ENCODE measurements at regions of chr9 and their contacts with region 1.

Region 1: DNA sequence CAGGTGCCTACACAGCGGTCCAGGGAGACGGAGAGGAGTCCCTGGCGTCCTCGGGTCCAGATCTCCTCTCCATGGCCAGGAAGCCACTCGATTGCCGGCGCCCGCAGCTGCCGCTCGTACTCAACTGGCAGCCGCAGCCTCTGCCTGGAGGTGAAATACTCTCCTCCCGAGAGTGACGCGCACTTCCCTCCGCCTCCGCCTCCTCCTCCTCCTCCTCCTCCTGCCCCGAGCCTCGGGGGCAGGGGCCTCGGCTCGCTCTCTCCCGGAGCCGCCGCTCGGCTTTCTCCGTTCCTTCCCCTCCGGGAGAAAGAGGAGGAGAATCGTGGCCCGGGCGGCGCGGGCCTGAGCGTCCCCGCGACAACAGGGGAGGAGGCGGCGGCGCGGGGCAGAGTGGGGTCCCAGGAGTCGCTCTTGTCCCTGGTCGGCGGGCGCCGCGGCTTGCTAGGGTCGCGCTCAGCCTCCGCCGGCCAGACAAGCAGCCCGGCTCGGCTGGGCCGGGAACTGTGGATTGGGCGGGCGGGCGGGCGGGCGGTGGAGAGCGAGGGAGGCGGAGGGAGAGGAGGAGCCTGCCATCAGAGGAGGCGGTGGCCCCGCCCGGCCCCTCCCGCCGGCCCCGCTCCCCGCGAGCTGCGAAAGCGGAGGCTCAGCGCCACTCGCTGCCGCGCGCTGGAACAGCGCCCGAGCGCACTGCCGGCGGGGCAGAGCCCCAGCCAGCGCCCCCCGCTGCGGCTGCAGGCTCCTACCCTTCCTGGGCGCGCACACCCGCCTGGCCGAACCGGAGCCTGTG is at the start of gene CEMIP2:
- DNase-seq: peak; percentile 87 to 92 (median 90)
- H3K4me3 ChIP-seq: peak within 1 kb of the TSS; percentile 82 to 86
- H3K4me3 Mint-ChIP-seq: peak within 1 kb of the TSS; percentile 95 to 99 (median 97)
- H3K27ac ChIP-seq: peak within 1 kb of the TSS; percentile 87
- H3K27ac Mint-ChIP-seq: peak within 1 kb of the TSS; percentile 97 to 99 (median 98)
- H3K4me1 ChIP-seq: peaks cover 42% of the 10 kb centered on the region
- H3K4me1 Mint-ChIP-seq: peaks cover 32 to 56% (median 38%) of the 10 kb centered on the region in 4 donors
- H3K27me3 ChIP-seq: no peaks in the 10 kb centered on the region
- H3K27me3 Mint-ChIP-seq: no peaks in the 10 kb centered on the region
- total RNA-seq, gene CEMIP2: 85.8 to 89.4 TPM

Region 2: DNA sequence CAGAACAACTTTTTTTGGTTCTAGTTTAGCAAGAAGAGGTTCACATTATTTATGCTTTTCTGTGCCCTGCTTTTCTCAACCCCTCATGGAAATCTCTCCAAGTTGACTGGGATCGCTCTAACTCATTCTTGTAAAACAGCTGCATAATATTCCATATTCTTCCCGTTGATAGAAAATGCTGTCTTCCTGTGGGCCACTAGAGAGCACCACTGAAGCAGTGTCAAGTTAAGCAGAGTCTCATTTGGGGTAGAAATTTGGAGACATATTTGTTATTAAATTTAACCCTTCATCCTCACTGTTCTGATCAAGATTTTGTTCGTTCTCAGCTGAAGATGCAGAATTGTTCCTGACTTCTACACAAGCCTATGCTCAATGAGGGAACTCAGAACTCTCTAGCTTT is 140.3 kb before region 1 on chr9:
- CTCF ChIA-PET with region 1: interaction called, 6 read pairs
- POLR2A ChIA-PET with region 1: interaction called, 3 read pairs
- intact Hi-C with region 1: loop called (anchors 1 kb)
- DNase-seq: peak in 4 of 5 donors; percentile 22 to 34 (median 25)
- H3K4me3 ChIP-seq: no peak overlapping the region
- H3K4me3 Mint-ChIP-seq: no peak overlapping the region
- H3K27ac ChIP-seq: no peak overlapping the region
- H3K27ac Mint-ChIP-seq: no peak overlapping the region
- H3K4me1 ChIP-seq: no peaks in the 10 kb centered on the region
- H3K4me1 Mint-ChIP-seq: peaks cover 0 to 2% (median 0%) of the 10 kb centered on the region in 4 donors
- H3K27me3 ChIP-seq: no peaks in the 10 kb centered on the region
- H3K27me3 Mint-ChIP-seq: no peaks in the 10 kb centered on the region

Region 3: DNA sequence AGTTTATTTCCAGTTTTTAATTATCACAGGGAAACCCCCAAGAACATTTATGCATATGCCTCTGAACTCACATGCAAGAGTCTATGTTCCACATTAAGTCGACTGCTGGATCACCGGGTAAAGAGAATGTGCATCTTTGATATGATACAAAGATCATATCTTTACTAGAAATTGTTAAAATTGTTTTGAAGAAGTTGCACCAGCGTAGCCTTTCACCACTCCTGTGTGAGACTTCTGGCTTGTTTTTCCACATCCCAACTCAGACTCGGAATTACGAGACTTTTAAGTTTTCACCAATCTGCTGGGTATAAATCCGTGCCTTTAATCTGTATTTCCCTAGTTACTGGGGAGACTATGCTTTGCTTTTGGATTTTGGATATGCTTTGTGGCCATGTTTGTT is 113.4 kb before region 1 on chr9:
- CTCF ChIA-PET with region 1: no interaction called
- POLR2A ChIA-PET with region 1: no interaction called
- intact Hi-C with region 1: no loop called
- DNase-seq: no peak
- H3K4me3 ChIP-seq: no peak overlapping the region
- H3K4me3 Mint-ChIP-seq: no peak overlapping the region
- H3K27ac ChIP-seq: no peak overlapping the region
- H3K27ac Mint-ChIP-seq: no peak overlapping the region
- H3K4me1 ChIP-seq: no peaks in the 10 kb centered on the region
- H3K4me1 Mint-ChIP-seq: peaks cover 0 to 4% (median 2%) of the 10 kb centered on the region in 4 donors
- H3K27me3 ChIP-seq: no peaks in the 10 kb centered on the region
- H3K27me3 Mint-ChIP-seq: no peaks in the 10 kb centered on the region

Region 4: GRCh38 chr9:71675129-71675856 is 93.3 kb before region 1 on chr9:
- CTCF ChIA-PET with region 1: no interaction called
- POLR2A ChIA-PET with region 1: no interaction called
- intact Hi-C with region 1: no loop called
- DNase-seq: no peak
- H3K4me3 ChIP-seq: no peak overlapping the region
- H3K4me3 Mint-ChIP-seq: no peak overlapping the region
- H3K27ac ChIP-seq: no peak overlapping the region
- H3K27ac Mint-ChIP-seq: no peak overlapping the region
- H3K4me1 ChIP-seq: no peaks in the 10 kb centered on the region
- H3K4me1 Mint-ChIP-seq: peaks cover 8 to 22% (median 15%) of the 10 kb centered on the region in 4 donors
- H3K27me3 ChIP-seq: no peaks in the 10 kb centered on the region
- H3K27me3 Mint-ChIP-seq: no peaks in the 10 kb centered on the region

Region 5: DNA sequence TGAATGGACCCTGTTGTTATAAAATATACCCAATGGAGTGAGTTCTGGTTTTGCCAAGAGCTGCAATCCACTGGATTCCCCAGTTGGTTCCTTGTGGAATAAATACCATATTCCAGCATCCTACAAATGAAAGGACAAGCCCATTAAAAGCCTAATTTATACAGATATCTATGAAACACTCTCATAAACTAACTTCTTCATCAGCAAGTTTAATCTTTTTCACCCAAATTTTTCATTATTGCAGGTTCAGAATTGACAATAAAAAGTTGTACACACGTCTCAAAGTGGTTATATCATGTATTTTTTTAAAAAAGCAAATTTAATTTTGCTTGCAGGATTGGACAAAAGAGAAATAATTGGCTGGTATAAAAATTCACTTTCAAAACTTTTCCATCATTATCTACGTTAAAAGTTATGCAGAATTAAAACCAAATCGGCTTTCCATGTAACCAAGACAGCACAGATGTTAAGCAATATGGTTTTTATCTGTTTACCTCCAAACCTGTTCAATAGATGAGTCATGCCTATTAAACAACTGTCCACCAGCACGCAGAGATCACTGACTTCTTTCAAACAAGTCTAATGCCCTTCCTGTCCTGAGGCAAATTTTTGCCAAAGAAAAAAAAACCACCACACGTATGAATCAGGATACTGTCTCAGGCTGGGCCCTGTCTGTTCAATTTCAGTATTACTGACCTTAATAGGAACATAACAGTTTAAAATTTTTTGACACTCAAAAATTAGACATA is 42.8 kb before region 1 on chr9:
- CTCF ChIA-PET with region 1: interaction called, 4 read pairs
- POLR2A ChIA-PET with region 1: interaction called, 4 read pairs
- intact Hi-C with region 1: loop called (anchors 2 kb)
- DNase-seq: no peak
- H3K4me3 ChIP-seq: no peak overlapping the region
- H3K4me3 Mint-ChIP-seq: no peak overlapping the region
- H3K27ac ChIP-seq: no peak overlapping the region
- H3K27ac Mint-ChIP-seq: peak overlapping the region in 1 of 7 donors; percentile 8
- H3K4me1 ChIP-seq: no peaks in the 10 kb centered on the region
- H3K4me1 Mint-ChIP-seq: peaks cover 0 to 4% (median 0%) of the 10 kb centered on the region in 4 donors
- H3K27me3 ChIP-seq: no peaks in the 10 kb centered on the region
- H3K27me3 Mint-ChIP-seq: no peaks in the 10 kb centered on the region

Region 6: DNA sequence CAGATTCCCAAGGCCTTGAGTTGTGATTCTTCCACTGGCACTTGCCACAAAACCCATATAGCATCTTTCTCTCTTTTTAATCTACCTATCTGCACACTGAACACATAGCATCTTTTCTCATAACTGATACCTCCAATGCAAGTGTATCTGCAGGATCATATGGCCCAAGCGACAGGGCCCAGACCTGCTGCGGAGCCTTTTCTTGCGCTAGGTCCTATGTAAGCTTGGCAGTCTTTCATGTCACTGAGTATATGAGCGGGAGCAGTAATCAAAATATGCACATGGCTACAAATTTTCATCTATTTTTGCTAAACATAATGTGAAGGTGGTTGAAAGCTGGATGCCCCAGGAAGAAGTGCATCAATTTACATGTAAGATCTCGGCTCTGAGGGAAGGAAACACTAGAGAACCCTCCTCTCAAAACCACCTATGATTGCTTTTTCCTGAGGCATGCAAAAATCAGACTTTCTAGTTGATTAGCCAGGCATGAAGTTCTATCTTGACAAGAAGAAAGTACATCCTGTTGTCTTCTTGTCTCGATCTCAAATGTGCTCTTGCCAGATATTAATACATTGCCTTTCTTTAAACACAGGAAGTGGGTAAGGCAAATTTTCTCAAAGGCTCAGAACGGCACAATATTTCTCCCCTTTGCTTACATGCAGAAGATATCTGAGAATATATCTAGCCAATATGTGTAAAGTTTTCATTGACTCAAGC is 26.7 kb after region 1 on chr9:
- CTCF ChIA-PET with region 1: interaction called, 7 read pairs
- POLR2A ChIA-PET with region 1: interaction called, 82 read pairs
- intact Hi-C with region 1: loop called (anchors 1 kb)
- DNase-seq: peak; percentile 47 to 81 (median 74)
- H3K4me3 ChIP-seq: peak overlapping the region; percentile 10 to 14
- H3K4me3 Mint-ChIP-seq: peak overlapping the region; percentile 61 to 79 (median 70)
- H3K27ac ChIP-seq: peak overlapping the region; percentile 49
- H3K27ac Mint-ChIP-seq: peak overlapping the region; percentile 85 to 97 (median 92)
- H3K4me1 ChIP-seq: peaks cover 74% of the 10 kb centered on the region
- H3K4me1 Mint-ChIP-seq: peaks cover 39 to 68% (median 57%) of the 10 kb centered on the region in 4 donors
- H3K27me3 ChIP-seq: no peaks in the 10 kb centered on the region
- H3K27me3 Mint-ChIP-seq: no peaks in the 10 kb centered on the region

Region 7: DNA sequence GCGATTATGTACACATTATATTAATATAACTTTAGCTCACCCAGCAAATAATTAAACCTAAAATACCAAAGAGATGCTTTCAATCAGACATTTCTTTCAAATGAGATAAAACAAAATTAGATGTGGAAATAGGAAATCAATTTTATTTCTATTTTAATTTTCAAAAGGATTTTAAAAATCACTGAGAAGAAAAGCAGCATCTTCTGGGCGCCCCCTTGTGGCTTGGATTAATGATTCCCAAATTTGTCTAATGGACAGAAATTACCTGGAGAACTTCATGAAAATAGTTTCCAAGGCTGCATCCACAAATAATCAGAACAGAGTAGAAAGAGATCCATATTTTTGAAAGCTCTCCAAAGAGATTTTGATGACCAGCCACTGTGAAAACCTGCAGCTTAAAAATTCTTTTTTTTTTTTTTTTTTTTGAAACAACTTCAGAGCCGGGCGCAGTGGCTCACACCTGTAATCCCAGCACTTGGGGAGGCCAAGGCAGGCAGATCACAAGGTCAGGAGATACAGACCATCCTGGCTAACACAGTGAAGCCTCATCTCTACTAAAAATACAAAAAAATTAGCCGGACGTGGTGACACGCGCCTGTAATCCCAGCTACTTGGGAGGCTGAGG is 50.6 kb after region 1 on chr9:
- CTCF ChIA-PET with region 1: interaction called, 48 read pairs
- POLR2A ChIA-PET with region 1: interaction called, 14 read pairs
- intact Hi-C with region 1: loop called (anchors 1 kb)
- DNase-seq: peak in 4 of 5 donors; percentile 47 to 56 (median 50)
- H3K4me3 ChIP-seq: no peak overlapping the region
- H3K4me3 Mint-ChIP-seq: no peak overlapping the region
- H3K27ac ChIP-seq: no peak overlapping the region
- H3K27ac Mint-ChIP-seq: no peak overlapping the region
- H3K4me1 ChIP-seq: no peaks in the 10 kb centered on the region
- H3K4me1 Mint-ChIP-seq: peaks cover 8 to 21% (median 13%) of the 10 kb centered on the region in 4 donors
- H3K27me3 ChIP-seq: no peaks in the 10 kb centered on the region
- H3K27me3 Mint-ChIP-seq: no peaks in the 10 kb centered on the region

Region 8: GRCh38 chr9:72254901-72255535 is 486.4 kb after region 1 on chr9:
- CTCF ChIA-PET with region 1: no interaction called
- POLR2A ChIA-PET with region 1: no interaction called
- intact Hi-C with region 1: no loop called
- DNase-seq: no peak
- H3K4me3 ChIP-seq: no peak overlapping the region
- H3K4me3 Mint-ChIP-seq: no peak overlapping the region
- H3K27ac ChIP-seq: no peak overlapping the region
- H3K27ac Mint-ChIP-seq: no peak overlapping the region
- H3K4me1 ChIP-seq: no peaks in the 10 kb centered on the region
- H3K4me1 Mint-ChIP-seq: no peaks in the 10 kb centered on the region
- H3K27me3 ChIP-seq: peaks cover 3% of the 10 kb centered on the region
- H3K27me3 Mint-ChIP-seq: peaks cover 20 to 42% of the 10 kb centered on the region in 2 donors